Activated CD4-positive, alpha-beta memory T cell treated with anti-CD3 and anti-CD28 coated beads for 36 hours (primary cell): ENCODE measurements at regions of chr17 and their contacts with region 1.

Region 1: DNA sequence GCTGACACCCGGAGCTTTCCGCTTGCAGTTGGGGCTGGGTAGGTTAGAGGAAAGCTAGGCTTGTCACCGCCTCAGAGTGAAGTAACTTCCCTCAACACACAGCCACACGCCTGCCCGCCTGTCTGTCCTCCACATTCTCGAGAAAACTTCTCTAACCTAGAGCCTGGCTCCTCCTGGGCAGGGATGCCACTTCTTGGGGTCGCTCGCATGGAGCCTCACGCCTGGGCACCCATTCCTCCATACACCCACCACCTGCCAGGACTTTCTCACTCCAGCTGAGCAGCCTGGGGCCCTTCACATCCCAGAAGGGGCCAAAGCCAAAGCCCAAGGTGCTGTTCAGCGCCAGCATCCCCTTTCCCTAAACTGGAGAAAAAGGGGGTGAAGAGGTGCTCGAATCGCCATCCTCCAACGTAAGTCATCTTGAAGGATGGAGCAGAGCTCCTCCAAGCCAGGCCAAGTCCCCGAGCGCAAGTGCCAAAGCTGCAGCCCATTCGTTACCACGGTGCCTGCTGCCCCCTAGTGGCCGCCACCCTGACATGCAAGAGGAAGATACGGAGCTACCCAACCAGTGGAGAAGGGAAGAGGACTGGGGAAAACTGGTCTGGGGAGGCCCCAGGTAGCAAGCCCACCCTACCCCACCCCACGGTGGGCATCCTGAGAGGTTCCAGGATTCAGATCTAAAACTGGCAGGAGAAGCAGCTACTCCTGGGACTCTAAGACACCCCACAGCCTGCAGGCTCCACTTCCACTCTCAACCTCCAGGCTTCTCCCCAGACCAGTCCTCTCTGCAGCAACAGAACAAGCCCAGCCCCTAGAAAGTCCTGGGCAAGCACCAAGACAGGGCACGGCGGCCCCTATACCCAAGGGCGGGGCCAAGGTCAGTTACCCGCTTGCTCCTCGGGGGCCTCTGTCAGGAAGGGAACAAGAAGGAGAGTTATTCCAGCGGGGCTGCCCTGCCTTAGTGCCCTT is 63.1 kb downstream of the MYO18A start:
- DNase-seq: peak; percentile 87
- H3K4me3 Mint-ChIP-seq: no peak overlapping the region
- H3K27ac Mint-ChIP-seq: no peak overlapping the region
- H3K4me1 Mint-ChIP-seq: peaks cover 4% of the 10 kb centered on the region
- H3K27me3 Mint-ChIP-seq: no peaks in the 10 kb centered on the region

Region 2: DNA sequence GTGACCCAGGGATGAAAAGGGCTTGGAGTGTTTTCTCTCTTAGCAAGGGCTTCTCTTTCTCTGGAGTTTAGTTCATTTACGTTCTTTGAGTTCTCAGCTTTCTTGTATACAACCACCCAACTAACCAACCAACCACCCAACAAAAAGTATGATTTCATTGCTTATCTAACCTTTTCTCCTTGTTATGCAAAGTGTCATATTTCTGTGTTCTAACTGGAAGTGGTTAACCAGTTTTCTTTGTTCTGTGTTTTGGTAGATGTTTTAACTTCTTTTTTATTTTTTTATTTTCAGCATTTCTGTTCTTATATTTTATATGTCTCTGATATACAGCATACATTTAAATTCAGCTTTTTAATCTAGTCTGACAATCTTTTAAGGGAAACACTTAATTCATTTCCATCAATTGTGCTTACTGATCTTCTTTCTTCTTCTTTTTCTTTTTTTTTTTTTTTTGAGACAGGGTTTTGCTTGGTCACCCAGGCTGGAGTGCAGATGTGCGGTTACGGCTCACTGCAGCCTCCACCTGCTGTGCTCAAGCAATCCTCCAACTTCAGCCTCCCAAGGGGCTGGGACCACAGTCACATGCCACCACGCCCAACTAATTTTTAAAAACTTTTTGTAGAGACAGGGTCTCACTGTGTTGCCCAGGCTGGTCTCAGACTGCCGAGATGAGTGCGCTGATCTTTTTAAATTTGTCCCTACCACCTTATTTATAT is 1045.0 kb before region 1 on chr17:
- CTCF ChIA-PET with region 1: no interaction called
- POLR2A ChIA-PET with region 1: no interaction called
- intact Hi-C with region 1: no loop called
- DNase-seq: no peak
- H3K4me3 Mint-ChIP-seq: no peak overlapping the region
- H3K27ac Mint-ChIP-seq: no peak overlapping the region
- H3K4me1 Mint-ChIP-seq: peaks cover 45% of the 10 kb centered on the region
- H3K27me3 Mint-ChIP-seq: no peaks in the 10 kb centered on the region

Region 3: GRCh38 chr17:28623696-28624095 is 493.4 kb before region 1 on chr17:
- CTCF ChIA-PET with region 1: no interaction called
- POLR2A ChIA-PET with region 1: no interaction called
- intact Hi-C with region 1: no loop called
- DNase-seq: no peak
- H3K4me3 Mint-ChIP-seq: no peak overlapping the region
- H3K27ac Mint-ChIP-seq: no peak overlapping the region
- H3K4me1 Mint-ChIP-seq: peaks cover 16% of the 10 kb centered on the region
- H3K27me3 Mint-ChIP-seq: no peaks in the 10 kb centered on the region

Region 4: DNA sequence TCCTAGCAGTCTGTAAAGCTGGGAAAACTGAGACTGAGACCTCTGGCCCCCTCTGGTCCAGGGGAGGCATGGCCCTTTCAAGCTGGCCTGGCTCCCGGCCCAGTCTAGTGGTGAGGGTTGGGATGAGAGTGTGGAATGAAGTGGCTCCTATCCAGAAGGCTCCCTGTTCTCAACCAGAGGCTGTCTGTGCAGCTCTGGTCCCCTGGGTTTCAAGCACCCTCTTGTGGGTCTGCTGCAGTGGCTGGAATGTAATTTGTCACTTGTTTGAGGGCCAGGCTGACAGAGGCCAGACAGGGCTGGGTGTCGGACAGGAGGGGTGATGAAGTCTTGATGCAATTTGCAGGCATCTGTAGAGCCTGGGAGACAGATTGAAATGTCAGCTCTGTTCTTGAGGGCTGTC is 143.7 kb before region 1 on chr17:
- CTCF ChIA-PET with region 1: interaction called, 41 read pairs
- POLR2A ChIA-PET with region 1: no interaction called
- intact Hi-C with region 1: no loop called
- DNase-seq: no peak
- H3K4me3 Mint-ChIP-seq: no peak overlapping the region
- H3K27ac Mint-ChIP-seq: no peak overlapping the region
- H3K4me1 Mint-ChIP-seq: no peaks in the 10 kb centered on the region
- H3K27me3 Mint-ChIP-seq: no peaks in the 10 kb centered on the region

Region 5: DNA sequence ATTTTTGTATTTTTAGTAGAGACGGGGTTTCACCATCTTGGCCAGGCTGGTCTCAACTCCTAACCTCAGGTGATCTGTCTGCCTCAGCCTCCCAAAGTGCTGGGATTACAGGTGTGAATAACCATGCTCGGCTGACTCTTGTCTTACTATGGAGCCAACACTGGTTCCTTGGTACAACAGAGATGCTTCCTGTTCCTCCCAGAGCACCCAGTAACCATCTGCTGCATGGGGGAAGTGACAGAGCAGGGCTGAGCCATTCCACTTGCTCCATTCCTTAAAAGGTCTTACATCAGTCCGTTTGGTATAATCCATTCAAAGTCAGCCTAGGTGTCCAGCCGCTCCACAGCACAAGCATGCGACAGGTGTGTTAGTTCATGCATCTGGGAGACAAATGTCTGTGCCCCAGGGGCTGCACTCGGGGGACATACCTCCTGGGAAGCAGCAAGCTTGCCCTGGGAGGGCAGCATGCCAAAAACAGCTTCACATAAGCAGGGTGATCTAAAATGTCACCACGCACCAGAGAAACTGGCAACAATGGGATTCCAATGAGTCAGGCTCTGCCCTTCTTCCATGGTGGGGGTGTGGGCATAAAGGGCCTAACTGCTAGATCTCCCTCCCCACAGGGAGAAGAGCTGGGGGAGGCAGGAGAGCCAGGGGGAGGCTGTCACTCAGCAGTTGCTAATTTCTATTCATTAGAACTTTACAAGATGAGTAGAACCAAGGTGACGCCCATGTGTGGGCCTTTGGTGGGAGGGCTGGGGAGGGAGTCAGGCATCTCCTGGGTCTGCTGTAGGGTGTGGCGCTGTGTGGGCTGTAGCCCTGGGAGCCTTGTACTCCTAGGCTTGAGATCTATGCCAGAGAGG is 38.7 kb before region 1 on chr17:
- CTCF ChIA-PET with region 1: interaction called, 10 read pairs
- POLR2A ChIA-PET with region 1: no interaction called
- intact Hi-C with region 1: no loop called
- DNase-seq: no peak
- H3K4me3 Mint-ChIP-seq: no peak overlapping the region
- H3K27ac Mint-ChIP-seq: no peak overlapping the region
- H3K4me1 Mint-ChIP-seq: no peaks in the 10 kb centered on the region
- H3K27me3 Mint-ChIP-seq: no peaks in the 10 kb centered on the region

Region 6: DNA sequence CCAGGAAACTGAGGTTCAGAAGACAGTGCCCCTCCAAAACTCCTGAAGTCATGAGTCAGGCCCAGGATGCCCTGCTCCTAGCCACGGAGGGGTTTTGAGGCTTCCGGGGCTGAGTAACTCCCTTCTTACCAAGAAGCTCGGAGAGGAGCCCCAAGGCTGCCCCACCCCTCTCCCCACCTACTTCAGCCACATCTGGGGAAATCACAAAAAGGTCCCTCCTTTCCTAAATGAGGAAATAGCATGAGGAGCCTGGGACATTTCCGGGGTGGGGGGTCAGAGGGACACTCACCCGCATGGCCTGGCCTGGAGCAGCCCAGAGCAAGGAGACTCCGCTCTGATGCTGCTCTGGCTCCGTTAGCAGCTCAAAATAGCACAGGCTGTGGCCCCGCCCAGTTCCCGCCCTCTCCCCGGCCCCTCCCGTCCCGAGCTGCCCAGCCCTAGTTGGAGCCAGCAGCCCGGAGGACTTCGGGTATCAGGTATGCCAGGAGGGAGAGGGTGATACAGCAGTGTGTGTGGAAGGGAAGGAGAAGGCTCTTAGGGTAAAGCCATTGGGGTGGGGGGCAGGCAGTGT is 23.0 kb after region 1 on chr17:
- CTCF ChIA-PET with region 1: interaction called, 216 read pairs
- POLR2A ChIA-PET with region 1: interaction called, 4 read pairs
- intact Hi-C with region 1: no loop called
- DNase-seq: peak; percentile 93
- H3K4me3 Mint-ChIP-seq: peak overlapping the region; percentile 93
- H3K27ac Mint-ChIP-seq: peak overlapping the region; percentile 97
- H3K4me1 Mint-ChIP-seq: peaks cover 69% of the 10 kb centered on the region
- H3K27me3 Mint-ChIP-seq: no peaks in the 10 kb centered on the region